ENCODE measurements at regions of chr22 and their contacts with region 1.

Region 1: GRCh38 chr22:31211862-31212730 is at the start of gene LIMK2:
- DNase-seq: peak; percentile 98
- CTCF ChIP-seq: peak; percentile 92

Region 2: DNA sequence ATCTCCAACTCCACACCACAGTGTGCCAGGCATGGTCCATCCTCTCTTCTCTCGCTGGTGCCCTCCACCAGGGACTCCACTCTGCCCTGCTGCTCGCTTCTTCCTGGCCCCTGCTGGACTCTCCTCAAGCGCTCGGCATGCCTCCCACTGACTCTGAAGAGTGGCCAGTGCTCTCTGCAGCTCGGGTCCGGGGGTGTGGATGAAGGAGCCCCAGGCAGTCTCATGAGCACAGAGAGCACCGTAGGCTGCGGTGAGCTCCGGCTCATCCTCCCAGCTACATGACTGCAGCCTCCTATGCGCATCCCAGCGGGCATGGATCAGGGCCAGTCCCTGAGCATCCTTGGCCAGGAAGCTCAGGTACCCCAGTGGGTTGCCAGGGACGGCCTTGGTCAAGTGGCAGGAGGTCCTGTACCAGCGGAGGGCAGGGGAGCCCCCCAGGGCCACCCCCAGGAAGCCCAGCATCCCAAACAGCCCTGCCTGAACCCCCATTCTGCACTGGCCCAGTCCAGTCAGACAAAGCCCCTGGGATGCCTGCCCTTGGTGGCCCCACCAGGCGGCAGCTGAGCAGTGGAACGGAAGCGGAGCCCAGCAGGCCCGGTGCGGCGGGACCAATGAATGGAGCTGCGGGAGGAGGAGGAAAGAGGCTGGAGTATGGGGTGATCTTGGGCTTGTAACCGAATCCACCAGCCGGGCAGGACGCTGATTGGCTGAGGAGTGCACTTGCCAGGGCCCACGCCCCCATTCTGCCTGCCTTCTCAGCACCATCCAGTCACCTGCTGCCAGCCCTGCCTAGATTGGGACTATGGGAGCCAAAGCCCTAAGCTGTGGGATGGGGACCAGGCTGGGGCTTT is 72.0 kb before region 1 on chr22 and contains the start of gene PLA2G3:
- CTCF ChIA-PET with region 1: no interaction called
- POLR2A ChIA-PET with region 1: no interaction called
- DNase-seq: no peak
- CTCF ChIP-seq: no peak

Region 3: GRCh38 chr22:31192513-31192912 is 19.6 kb before region 1 on chr22:
- CTCF ChIA-PET with region 1: interaction called, 18 read pairs
- POLR2A ChIA-PET with region 1: no interaction called
- DNase-seq: no peak
- CTCF ChIP-seq: no peak

Region 4: DNA sequence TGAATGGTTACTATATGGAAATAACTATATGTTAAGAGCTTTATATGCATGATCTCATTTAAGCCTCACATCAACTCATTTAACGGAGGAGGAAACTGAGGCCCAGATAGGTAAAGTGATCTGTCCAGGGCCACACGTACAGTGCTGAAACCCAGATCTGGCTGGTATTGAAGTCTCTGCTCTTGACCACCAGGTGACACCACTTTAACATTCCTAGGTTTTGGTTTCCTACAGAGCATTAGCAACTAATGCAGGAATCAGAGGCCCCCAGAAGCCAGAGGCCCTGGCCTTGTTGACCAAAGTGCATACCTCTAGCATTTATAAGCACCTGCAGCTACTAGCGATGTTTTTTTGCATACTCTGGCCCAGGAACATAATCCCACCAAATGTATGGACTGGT is 12.9 kb before region 1 on chr22:
- CTCF ChIA-PET with region 1: interaction called, 36 read pairs
- POLR2A ChIA-PET with region 1: no interaction called
- DNase-seq: no peak
- CTCF ChIP-seq: no peak

Region 5: DNA sequence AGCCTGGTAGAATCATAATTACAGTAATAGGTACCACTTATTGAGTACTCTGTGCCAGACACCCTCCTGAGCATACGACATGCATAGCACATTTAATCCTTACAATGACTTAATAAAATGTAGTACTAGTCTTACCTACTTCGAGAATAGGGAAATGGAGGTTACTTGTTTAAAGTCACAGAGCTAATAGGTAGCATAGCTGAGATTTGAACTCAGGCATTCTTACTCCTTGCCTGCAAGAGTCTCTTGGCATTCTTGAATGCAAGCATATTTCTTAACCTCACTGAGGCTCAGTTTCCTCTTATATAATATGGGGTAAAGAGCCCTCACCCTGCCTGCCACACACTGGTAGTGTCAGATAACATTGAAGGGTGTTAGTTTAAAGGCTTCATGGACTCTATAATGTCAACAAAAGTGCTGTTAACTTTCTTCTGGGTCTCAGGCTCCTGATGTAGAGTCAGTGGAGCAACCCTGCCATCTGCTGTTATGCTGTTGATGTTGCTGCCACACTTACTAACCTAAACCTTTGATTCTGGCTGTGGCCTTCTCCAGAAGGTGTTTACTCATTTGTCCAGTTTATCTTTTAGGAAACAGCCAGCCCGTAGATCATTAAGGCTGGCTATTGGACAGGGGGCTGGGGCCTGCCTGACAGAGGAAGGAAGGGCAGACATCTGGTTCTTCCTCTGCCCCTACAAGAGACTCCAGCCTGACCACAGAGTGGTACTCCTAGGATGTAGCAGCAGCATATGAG is 18.9 kb after region 1 on chr22:
- CTCF ChIA-PET with region 1: interaction called, 200 read pairs
- POLR2A ChIA-PET with region 1: no interaction called
- DNase-seq: peak; percentile 51
- CTCF ChIP-seq: peak; percentile 78

Region 6: GRCh38 chr22:31248138-31248745 is 36.1 kb after region 1 on chr22:
- CTCF ChIA-PET with region 1: interaction called, 15 read pairs
- POLR2A ChIA-PET with region 1: no interaction called
- DNase-seq: peak; percentile 63
- CTCF ChIP-seq: no peak

Region 7: DNA sequence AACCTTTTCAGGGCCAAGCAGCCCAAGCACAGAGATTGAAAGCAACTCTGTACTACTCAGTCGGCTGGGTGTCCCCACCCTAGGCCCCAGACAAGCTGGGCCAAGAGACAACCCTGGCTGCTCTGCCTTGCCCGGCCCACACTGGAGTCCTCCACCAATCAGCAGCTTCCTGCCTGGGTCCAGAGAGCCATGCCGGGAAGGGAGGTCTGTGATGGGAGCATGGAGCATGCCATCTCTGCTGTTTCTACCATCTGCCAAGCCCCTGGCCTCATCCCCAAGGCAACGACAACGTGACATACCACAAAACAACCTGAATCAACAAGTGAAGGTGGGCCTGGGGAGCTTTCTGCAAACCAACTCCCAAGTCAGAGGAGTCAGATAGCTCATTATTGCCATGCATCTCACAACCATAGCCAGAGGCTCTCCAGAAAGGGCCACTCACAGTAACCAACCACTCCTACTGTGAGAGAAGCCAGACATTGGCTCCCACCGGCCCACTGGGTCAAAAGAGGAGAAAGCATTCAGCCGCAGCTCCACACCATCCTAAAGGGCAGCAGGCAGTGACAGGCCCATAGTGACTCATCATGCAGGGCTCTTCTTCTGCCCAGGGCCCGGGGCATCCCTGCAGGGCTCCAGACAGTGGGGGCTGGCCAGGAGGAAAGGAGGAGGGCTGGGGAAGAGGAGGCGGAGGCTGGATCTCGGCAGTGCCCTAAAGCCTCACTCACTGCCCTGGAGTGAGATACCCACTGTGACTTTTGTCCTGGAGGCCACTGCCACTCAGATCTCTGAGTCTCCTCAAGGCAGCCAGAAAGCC is 116.0 kb after region 1 on chr22:
- CTCF ChIA-PET with region 1: no interaction called
- POLR2A ChIA-PET with region 1: no interaction called
- DNase-seq: no peak
- CTCF ChIP-seq: no peak

Region 8: DNA sequence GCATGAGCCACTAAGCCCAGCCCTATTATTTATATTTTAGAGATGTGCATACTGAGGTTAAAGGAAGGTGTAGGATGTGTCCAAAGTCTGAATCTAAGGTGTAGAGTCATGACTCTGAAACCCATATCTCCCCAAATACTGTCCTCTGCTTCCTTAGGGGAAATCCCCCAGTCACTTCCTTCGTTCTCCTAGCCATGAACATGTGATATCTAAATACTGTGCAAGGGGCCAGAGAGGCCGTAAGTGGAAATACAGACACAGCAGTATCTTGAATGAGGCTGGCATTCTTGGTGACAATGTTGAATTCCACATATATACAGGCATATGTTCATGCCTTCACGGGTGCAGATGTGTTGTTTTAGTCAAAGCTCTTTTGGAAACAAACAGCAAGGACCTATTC is 155.3 kb after region 1 on chr22:
- CTCF ChIA-PET with region 1: no interaction called
- POLR2A ChIA-PET with region 1: no interaction called
- DNase-seq: no peak
- CTCF ChIP-seq: no peak